Activated CD8-positive, alpha-beta T cell treated with anti-CD3 and anti-CD28 coated beads for 36 hours (primary cell): ENCODE measurements at regions of chr20 and their contacts with region 1.

Region 1: DNA sequence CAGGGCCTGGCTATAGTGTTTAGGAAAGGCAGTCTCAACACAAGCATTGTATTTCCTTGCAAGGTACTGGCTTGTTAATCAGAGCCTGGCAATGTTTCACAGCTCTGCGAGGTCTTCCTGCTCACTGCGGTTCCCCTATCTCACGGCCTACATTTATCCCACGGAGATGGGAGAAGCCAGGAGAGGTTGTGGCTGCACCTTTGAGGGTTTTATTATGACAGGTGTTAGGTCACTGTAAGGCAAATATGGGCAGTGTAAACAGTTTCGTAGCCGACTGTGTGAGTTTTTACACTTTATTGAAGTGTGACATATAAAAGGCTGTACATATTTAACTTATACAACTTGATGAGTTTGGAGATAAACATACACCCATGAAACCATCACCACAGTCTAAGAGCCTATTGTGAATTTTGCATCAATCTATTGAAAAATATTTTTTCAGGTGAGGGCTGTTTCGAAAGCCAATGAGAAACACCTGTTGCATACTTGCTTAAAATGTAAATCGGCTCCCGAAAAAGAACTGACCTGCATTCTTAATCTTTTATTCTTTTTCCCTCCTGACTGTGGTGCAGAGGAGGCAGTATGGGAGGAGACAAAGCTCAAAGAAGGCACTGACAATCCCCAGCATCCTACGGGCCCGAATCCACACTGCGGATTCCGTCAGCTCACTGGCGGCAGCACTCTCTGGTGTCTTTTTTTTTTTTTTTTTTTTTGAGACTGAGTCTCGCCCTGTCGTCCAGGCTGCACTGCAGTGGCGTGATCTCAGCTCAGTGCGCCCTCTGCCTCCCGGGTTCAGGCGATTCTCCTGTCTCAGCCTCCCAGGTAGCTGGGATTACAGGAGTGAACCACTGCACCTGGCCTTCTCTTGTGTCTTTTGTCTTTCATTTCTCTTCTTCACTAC is 7.5 kb upstream of the RBM38 start:
- DNase-seq: no peak
- ATAC-seq: no peak
- H3K4me3 Mint-ChIP-seq: no peak overlapping the region
- H3K27ac Mint-ChIP-seq: no peak overlapping the region
- H3K4me1 Mint-ChIP-seq: peaks cover 22% of the 10 kb centered on the region
- H3K27me3 Mint-ChIP-seq: no peaks in the 10 kb centered on the region
- CTCF ChIP-seq: no peak

Region 2: DNA sequence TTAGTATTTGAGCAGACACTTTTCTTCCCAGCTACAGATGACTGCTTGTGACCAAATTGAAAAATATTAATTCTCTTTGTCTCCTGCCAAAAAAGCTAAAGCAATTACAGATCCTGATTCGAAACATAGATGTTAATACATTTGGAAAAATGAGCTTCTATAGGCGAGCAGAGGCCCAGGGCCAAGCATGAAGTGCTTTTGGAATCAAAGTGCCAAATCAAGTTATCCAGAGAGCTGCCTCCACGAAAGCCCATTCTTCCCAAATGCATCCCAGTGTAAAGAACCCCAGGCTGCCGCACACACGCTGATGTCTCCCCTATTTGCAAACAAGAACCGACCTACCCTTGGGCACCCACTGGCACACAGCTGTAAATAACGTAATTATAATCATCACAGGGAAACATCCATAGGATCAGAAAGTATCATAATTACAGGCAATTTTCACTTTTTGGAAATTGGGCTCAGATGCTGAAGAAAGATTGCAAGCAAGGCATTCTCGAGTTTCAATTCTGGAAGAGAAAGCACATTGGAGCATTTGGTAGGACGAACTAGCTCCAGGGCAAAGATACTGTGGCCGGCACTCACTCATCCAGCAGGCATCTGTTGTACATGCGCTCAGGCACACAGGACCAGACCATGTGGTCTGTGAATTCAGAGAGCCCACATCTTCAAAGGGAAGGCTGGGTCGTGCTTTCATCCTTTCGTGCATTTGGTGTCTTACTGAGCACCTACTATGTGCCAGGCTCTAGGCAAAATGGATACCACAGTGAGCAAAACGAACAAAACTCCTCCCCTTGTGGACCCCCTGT is 163.2 kb before region 1 on chr20:
- CTCF ChIA-PET with region 1: no interaction called
- POLR2A ChIA-PET with region 1: no interaction called
- intact Hi-C with region 1: no loop called
- DNase-seq: no peak
- ATAC-seq: no peak
- H3K4me3 Mint-ChIP-seq: no peak overlapping the region
- H3K27ac Mint-ChIP-seq: no peak overlapping the region
- H3K4me1 Mint-ChIP-seq: no peaks in the 10 kb centered on the region
- H3K27me3 Mint-ChIP-seq: peaks cover 4% of the 10 kb centered on the region
- CTCF ChIP-seq: no peak

Region 3: GRCh38 chr20:57473246-57474048 is 89.8 kb after region 1 on chr20:
- CTCF ChIA-PET with region 1: interaction called, 26 read pairs
- POLR2A ChIA-PET with region 1: interaction called, 4 read pairs
- intact Hi-C with region 1: no loop called
- DNase-seq: peak; percentile 71
- ATAC-seq: peak; percentile 93
- H3K4me3 Mint-ChIP-seq: no peak overlapping the region
- H3K27ac Mint-ChIP-seq: peak overlapping the region; percentile 49
- H3K4me1 Mint-ChIP-seq: peaks cover 22% of the 10 kb centered on the region
- H3K27me3 Mint-ChIP-seq: no peaks in the 10 kb centered on the region
- CTCF ChIP-seq: no peak

Region 4: GRCh38 chr20:57498425-57499400 is 115.0 kb after region 1 on chr20:
- CTCF ChIA-PET with region 1: interaction called, 35 read pairs
- POLR2A ChIA-PET with region 1: no interaction called
- intact Hi-C with region 1: loop called (anchors 1 kb)
- DNase-seq: peak; percentile 66
- ATAC-seq: peak; percentile 86
- H3K4me3 Mint-ChIP-seq: no peak overlapping the region
- H3K27ac Mint-ChIP-seq: no peak overlapping the region
- H3K4me1 Mint-ChIP-seq: peaks cover 11% of the 10 kb centered on the region
- H3K27me3 Mint-ChIP-seq: peaks cover 30% of the 10 kb centered on the region
- CTCF ChIP-seq: peak; percentile 52

Region 5: DNA sequence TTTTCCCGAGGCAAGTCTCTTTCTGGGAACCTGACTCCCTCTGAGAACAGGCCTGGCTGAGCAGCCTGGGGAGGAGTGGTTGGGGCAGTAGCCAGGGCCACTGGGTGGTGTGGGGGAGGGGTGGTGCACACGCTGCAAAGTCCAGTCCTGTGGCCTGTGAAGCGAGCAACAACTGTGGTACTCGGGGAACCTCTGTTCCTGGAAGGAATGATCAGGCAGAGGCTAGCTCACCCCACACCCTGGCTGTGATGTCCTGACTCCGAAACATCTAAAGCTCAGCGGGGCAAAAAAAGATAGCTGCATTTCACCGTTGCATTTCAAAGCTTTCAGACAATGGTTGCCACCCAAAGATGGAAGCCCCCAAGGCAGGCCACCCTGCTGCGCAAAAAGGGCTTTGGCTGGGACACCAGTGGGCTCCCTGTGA is 202.7 kb after region 1 on chr20:
- CTCF ChIA-PET with region 1: no interaction called
- POLR2A ChIA-PET with region 1: no interaction called
- intact Hi-C with region 1: loop called (anchors 5 kb)
- DNase-seq: no peak
- ATAC-seq: no peak
- H3K4me3 Mint-ChIP-seq: no peak overlapping the region
- H3K27ac Mint-ChIP-seq: no peak overlapping the region
- H3K4me1 Mint-ChIP-seq: no peaks in the 10 kb centered on the region
- H3K27me3 Mint-ChIP-seq: peaks cover 18% of the 10 kb centered on the region
- CTCF ChIP-seq: no peak